GM12878 (cell line): ENCODE measurements at regions of chr15 and their contacts with region 1.

Region 1: DNA sequence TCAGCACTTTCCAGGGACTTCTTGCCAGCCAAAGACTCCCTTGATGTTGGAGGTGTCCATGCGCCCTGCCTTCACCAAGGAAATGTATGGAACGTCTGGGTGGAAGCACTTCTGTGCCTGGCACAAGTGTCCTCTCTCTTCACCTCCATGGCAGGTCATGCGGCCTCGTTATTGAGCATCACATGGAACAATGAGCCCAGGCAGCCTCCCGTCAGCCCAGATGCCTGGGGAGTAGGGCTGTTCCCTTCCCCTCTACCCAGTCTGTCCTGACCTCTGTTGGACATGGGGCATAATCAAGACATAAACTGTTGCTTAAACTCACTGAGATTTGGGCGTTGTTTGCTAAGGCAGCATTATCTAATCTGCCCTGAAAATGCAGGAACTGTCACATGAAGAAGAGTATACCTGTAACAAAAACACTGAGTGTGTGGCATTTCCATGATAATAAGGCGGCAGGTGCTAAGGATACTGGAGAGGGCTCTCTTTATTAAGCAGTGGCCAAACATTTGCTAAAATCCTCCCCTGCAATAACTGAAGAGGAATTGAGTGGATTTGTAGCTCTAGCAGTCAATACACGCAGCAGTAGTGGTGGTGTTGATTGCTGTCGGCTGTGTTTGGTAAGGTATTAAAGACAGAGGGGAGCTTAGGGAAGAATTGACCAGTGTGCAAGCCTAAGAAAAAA is 338.2 kb upstream of the ATP10A start:
- DNase-seq: no peak
- ATAC-seq: no peak
- H3K4me3 ChIP-seq: no peak overlapping the region
- H3K27ac ChIP-seq: no peak overlapping the region
- H3K4me1 ChIP-seq: no peaks in the 10 kb centered on the region
- H3K27me3 ChIP-seq: no peaks in the 10 kb centered on the region
- CTCF ChIP-seq: no peak
- EP300 ChIP-seq: no peak
- POLR2A ChIP-seq: no peak
- RAD21 ChIP-seq: no peak

Region 2: DNA sequence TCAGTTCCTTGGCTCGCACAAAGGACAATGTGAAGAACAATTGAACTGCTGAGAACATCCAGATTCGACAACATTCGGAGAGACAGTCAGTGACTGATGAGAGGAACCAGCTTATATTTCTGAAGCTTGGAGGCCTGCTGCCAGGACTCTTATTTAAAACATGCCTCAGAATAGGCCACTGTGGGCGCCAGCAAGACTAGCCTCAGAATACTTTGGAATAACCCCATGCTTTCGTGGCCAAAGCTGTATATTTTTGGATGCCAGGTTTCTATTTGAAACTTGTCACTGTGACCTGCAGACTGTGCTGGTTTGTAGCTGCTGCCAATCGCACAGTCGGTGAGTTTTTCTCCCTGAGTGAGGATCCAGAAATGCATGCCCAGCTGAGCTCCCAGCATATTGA is 632.6 kb before region 1 on chr15:
- CTCF ChIA-PET with region 1: no interaction called
- POLR2A ChIA-PET with region 1: no interaction called
- RAD21 ChIA-PET with region 1: no interaction called
- SMC1A ChIA-PET with region 1: no interaction called
- in situ Hi-C with region 1: loop called (anchors 25 kb)
- intact Hi-C with region 1: no loop called
- DNase-seq: no peak
- ATAC-seq: no peak
- H3K4me3 ChIP-seq: no peak overlapping the region
- H3K27ac ChIP-seq: no peak overlapping the region
- H3K4me1 ChIP-seq: no peaks in the 10 kb centered on the region
- H3K27me3 ChIP-seq: no peaks in the 10 kb centered on the region
- CTCF ChIP-seq: no peak
- EP300 ChIP-seq: no peak
- POLR2A ChIP-seq: no peak
- RAD21 ChIP-seq: no peak

Region 3: GRCh38 chr15:25624504-25625177 is 576.7 kb before region 1 on chr15:
- CTCF ChIA-PET with region 1: no interaction called
- POLR2A ChIA-PET with region 1: no interaction called
- RAD21 ChIA-PET with region 1: no interaction called
- SMC1A ChIA-PET with region 1: no interaction called
- in situ Hi-C with region 1: loop called (anchors 25 kb)
- intact Hi-C with region 1: no loop called
- DNase-seq: no peak
- ATAC-seq: no peak
- H3K4me3 ChIP-seq: no peak overlapping the region
- H3K27ac ChIP-seq: no peak overlapping the region
- H3K4me1 ChIP-seq: no peaks in the 10 kb centered on the region
- H3K27me3 ChIP-seq: no peaks in the 10 kb centered on the region
- CTCF ChIP-seq: no peak
- EP300 ChIP-seq: no peak
- POLR2A ChIP-seq: no peak
- RAD21 ChIP-seq: no peak